Activated CD4-positive, alpha-beta T cell treated with anti-CD3 and anti-CD28 coated beads, Interleukin-2, amount 10 ng/mL, durations not matched to agents 7 days and 5 days (primary cell): ENCODE measurements at regions of chr3 and their contacts with region 1.

Region 1: GRCh38 chr3:124761250-124761796 is 31.1 kb downstream of the UMPS start:
- DNase-seq: peak; percentile 82
- H3K4me3 Mint-ChIP-seq: peak overlapping the region; percentile 14
- H3K27ac Mint-ChIP-seq: no peak overlapping the region
- H3K4me1 Mint-ChIP-seq: peaks cover 7% of the 10 kb centered on the region
- H3K27me3 Mint-ChIP-seq: no peaks in the 10 kb centered on the region

Region 2: GRCh38 chr3:124439603-124440002 is 321.7 kb before region 1 on chr3:
- CTCF ChIA-PET with region 1: no interaction called
- POLR2A ChIA-PET with region 1: no interaction called
- DNase-seq: no peak
- H3K4me3 Mint-ChIP-seq: no peak overlapping the region
- H3K27ac Mint-ChIP-seq: no peak overlapping the region
- H3K4me1 Mint-ChIP-seq: no peaks in the 10 kb centered on the region
- H3K27me3 Mint-ChIP-seq: peaks cover 1% of the 10 kb centered on the region

Region 3: GRCh38 chr3:124780761-124781475 is 19.6 kb after region 1 on chr3:
- CTCF ChIA-PET with region 1: interaction called, 10 read pairs
- POLR2A ChIA-PET with region 1: interaction called, 3 read pairs
- DNase-seq: no peak
- H3K4me3 Mint-ChIP-seq: no peak overlapping the region
- H3K27ac Mint-ChIP-seq: peak overlapping the region; percentile 76
- H3K4me1 Mint-ChIP-seq: peaks cover 12% of the 10 kb centered on the region
- H3K27me3 Mint-ChIP-seq: peaks cover 8% of the 10 kb centered on the region

Region 4: DNA sequence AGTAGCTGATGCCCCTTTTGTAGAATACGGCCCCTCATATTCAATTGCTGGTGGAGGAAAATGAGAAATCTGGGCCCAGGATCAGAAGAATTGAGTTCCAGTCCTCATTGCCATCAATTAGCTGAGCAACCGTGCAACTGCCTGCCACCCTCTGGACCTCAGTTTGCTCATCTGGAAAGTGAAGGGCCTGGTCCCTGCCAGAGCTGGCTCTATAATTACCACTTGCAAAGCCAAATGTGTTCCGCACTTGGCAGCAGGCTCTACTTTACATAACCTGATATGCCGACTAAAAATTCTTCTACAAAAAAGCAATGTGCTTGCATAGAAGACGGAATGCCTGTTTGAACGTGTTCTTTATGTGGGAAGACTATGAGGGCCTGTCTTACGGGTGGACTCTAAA is 134.4 kb after region 1 on chr3:
- CTCF ChIA-PET with region 1: interaction called, 40 read pairs
- POLR2A ChIA-PET with region 1: no interaction called
- DNase-seq: no peak
- H3K4me3 Mint-ChIP-seq: no peak overlapping the region
- H3K27ac Mint-ChIP-seq: no peak overlapping the region
- H3K4me1 Mint-ChIP-seq: peaks cover under 1% of the 10 kb centered on the region
- H3K27me3 Mint-ChIP-seq: peaks cover 2% of the 10 kb centered on the region